ENCODE measurements at regions of chrX and their contacts with region 1.

Region 1: DNA sequence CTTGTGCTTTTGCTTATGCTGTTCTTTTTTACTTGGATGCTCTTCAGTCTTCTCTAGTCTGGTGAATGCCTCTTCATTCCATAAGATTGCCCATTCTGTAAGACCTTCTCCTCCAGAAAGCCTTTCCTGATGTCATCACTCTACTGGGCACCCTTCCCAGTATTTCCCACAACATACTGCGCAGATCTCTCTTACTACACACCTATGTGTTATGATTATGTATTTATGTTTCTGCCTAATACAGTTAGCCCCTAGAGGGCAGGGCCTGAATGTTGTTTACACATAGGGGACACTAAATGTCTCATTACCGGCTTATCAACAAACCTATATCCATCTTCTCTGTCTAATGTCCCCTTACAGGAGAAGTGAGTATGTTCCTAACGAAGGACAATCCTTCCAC is 21.1 kb downstream of the AIFM1 start:
- DNase-seq: no peak
- ATAC-seq: no peak
- H3K4me3 Mint-ChIP-seq: no peak overlapping the region
- H3K27ac Mint-ChIP-seq: no peak overlapping the region
- H3K4me1 Mint-ChIP-seq: no peaks in the 10 kb centered on the region
- H3K27me3 Mint-ChIP-seq: no peaks in the 10 kb centered on the region

Region 2: DNA sequence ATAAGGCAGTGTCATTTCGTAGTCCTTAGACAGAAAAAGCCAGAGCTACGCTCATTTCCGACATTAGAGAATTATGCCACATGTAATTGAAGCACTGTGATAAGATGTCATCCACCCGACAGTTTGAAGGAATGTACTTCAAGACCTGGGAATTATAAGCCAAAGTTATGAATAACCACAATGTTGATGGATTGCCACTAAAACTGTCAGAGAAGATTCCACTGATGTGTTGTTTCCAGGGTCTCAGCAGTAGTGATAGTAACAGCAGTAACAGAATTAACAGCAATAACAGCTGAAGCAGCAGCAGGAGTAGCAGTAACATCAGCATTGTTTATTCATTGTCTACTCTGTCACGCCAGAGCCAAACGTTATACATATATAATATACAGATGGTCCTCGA is 52.0 kb after region 1 on chrX:
- CTCF ChIA-PET with region 1: interaction called, 3 read pairs
- POLR2A ChIA-PET with region 1: no interaction called
- intact Hi-C with region 1: loop called (anchors 5 to 10 kb)
- DNase-seq: no peak
- ATAC-seq: no peak
- H3K4me3 Mint-ChIP-seq: no peak overlapping the region
- H3K27ac Mint-ChIP-seq: no peak overlapping the region
- H3K4me1 Mint-ChIP-seq: no peaks in the 10 kb centered on the region
- H3K27me3 Mint-ChIP-seq: no peaks in the 10 kb centered on the region

Measured in activated CD4-positive, alpha-beta T cell treated with anti-CD3 and anti-CD28 coated beads for 36 hours (primary cell).